ENCODE measurements at regions of chr5 and their contacts with region 1.

Region 1: GRCh38 chr5:86679529-86679928 is 61.8 kb downstream of the COX7C start:
- DNase-seq: peak; percentile 79
- ATAC-seq: peak; percentile 93
- H3K4me3 ChIP-seq: no peak overlapping the region
- H3K27ac ChIP-seq: no peak overlapping the region
- H3K4me1 ChIP-seq: no peaks in the 10 kb centered on the region
- H3K27me3 ChIP-seq: peaks cover 5% of the 10 kb centered on the region; the same call in 1 of the 2 replicates
- CTCF ChIP-seq: peak; percentile 91

Region 2: DNA sequence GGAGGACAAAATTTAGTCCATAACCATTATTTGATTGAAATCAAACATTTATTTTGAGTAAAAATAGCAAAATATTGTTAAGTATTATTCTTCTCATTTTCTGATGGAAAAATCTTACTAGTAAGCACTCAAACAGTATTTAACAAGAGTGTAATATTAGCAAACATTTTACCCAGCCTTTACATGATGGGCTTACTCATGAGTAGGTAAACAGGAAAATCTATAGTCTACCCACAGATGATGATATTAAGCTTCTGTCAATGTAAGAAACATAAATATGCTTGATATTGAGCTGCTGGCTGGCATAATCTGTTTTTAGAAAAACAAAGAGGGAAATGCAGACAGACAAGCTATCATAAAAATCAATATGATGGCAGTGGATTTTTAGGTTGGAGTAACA is 480.2 kb before region 1 on chr5:
- CTCF ChIA-PET with region 1: no interaction called
- POLR2A ChIA-PET with region 1: no interaction called
- intact Hi-C with region 1: loop called (anchors 1 kb)
- DNase-seq: peak; percentile 26
- ATAC-seq: peak; percentile 96
- H3K4me3 ChIP-seq: no peak overlapping the region
- H3K27ac ChIP-seq: no peak overlapping the region
- H3K4me1 ChIP-seq: no peaks in the 10 kb centered on the region
- H3K27me3 ChIP-seq: no peaks in the 10 kb centered on the region
- CTCF ChIP-seq: no peak

Region 3: DNA sequence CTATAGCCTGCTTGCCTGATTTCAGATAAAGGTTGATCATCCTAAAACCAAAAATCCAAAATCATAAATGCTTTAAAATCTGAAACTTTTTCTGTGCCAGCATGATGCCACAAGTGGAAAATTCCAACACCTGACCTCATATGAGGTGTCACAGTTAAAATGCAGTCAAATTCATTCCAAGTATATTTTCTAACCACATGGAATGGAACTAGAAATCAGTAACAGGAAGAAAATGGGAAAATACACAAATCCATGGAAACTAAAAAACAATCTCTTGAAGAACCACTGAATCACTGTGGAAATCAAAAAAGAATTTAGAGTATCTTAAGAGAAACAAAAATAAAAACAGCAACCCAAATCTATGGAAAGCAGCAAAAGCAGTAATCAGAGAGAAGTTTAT is 359.3 kb before region 1 on chr5:
- CTCF ChIA-PET with region 1: no interaction called
- POLR2A ChIA-PET with region 1: no interaction called
- intact Hi-C with region 1: loop called (anchors 5 kb)
- DNase-seq: no peak
- ATAC-seq: no peak; the same call in 1 of the 2 replicates
- H3K4me3 ChIP-seq: no peak overlapping the region
- H3K27ac ChIP-seq: no peak overlapping the region
- H3K4me1 ChIP-seq: no peaks in the 10 kb centered on the region
- H3K27me3 ChIP-seq: no peaks in the 10 kb centered on the region
- CTCF ChIP-seq: no peak

Region 4: DNA sequence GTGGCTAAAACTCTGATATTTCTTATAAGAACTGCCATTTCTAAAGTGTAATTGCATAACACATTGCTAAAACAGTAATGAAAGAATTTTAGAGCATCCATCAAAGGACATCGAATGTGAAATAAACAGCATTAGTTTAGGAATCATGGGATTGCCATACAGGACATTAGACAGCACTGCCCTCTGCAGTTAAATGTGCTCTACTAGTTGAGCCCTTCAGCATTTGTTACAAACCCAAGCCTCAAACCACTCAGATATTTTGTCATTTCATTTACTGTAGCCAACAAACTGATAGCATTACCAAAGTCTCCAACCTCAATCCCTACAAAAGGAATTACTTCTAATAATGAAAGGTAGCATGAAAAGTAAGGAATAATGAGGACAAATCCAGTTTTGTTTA is 178.6 kb before region 1 on chr5:
- CTCF ChIA-PET with region 1: no interaction called
- POLR2A ChIA-PET with region 1: interaction called, 3 read pairs
- intact Hi-C with region 1: loop called (anchors 5 kb)
- DNase-seq: peak; percentile 66
- ATAC-seq: peak; percentile 98
- H3K4me3 ChIP-seq: no peak overlapping the region
- H3K27ac ChIP-seq: no peak overlapping the region
- H3K4me1 ChIP-seq: no peaks in the 10 kb centered on the region
- H3K27me3 ChIP-seq: no peaks in the 10 kb centered on the region
- CTCF ChIP-seq: peak; percentile 80

Region 5: GRCh38 chr5:86565197-86565789 is 114.2 kb before region 1 on chr5:
- CTCF ChIA-PET with region 1: interaction called, 4 read pairs
- POLR2A ChIA-PET with region 1: no interaction called
- intact Hi-C with region 1: loop called (anchors 1 kb)
- DNase-seq: no peak
- ATAC-seq: no peak
- H3K4me3 ChIP-seq: no peak overlapping the region
- H3K27ac ChIP-seq: no peak overlapping the region
- H3K4me1 ChIP-seq: no peaks in the 10 kb centered on the region
- H3K27me3 ChIP-seq: no peaks in the 10 kb centered on the region
- CTCF ChIP-seq: no peak

Region 6: GRCh38 chr5:86737579-86737978 is 58.0 kb after region 1 on chr5:
- CTCF ChIA-PET with region 1: no interaction called
- POLR2A ChIA-PET with region 1: no interaction called
- intact Hi-C with region 1: no loop called
- DNase-seq: no peak
- ATAC-seq: no peak
- H3K4me3 ChIP-seq: no peak overlapping the region
- H3K27ac ChIP-seq: no peak overlapping the region
- H3K4me1 ChIP-seq: no peaks in the 10 kb centered on the region
- H3K27me3 ChIP-seq: no peaks in the 10 kb centered on the region
- CTCF ChIP-seq: no peak

Region 7: DNA sequence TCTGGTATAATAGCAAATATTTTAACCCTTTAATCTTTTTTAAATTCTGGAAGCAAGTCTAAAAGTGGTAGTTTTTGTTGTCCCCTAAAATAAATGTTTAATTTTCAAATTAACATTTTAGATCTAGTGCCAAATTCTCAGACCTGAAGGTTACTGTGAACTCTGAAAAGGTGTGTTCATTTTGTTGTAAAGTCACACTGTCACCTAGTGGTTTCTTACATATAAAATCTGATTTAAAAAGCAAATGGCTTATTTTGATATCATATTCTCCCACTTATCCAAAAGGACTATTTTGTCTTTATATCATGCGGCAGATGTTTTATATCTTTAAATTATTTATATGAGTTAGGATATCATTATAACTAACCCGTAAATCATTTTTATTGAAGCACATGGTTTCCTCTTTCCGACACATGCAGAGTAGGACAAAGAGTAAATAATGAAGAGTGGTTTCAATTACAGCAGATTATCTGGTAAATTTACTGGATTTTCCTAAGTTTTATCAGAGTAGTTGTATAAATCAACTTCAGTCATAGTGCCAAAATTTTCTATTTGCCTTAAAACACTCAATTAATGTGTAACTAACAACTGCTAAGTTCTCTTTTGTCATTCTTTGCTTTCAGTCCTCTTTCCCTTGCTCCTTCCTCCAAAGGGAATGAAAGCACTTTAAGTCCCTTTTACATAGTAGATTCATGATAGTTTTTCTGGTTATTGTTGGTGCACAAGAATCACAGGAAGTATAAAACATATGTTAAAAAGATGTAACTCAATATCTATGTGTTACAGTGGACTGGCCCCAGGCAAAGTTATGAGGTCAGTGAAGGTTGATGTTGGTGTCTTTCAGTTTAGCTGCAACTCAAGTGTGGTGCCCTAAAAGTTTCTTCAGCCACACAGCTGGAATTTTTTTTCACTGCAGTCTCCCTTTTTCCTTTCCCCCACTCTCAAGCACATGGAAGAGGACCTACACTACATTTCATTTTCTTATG is 127.8 kb after region 1 on chr5:
- CTCF ChIA-PET with region 1: no interaction called
- POLR2A ChIA-PET with region 1: no interaction called
- intact Hi-C with region 1: loop called (anchors 1 kb)
- DNase-seq: peak; percentile 41
- ATAC-seq: peak; percentile 71
- H3K4me3 ChIP-seq: no peak overlapping the region
- H3K27ac ChIP-seq: no peak overlapping the region
- H3K4me1 ChIP-seq: peaks cover 6% of the 10 kb centered on the region; the same call in 1 of the 2 replicates
- H3K27me3 ChIP-seq: no peaks in the 10 kb centered on the region
- CTCF ChIP-seq: peak; percentile 63

Region 8: GRCh38 chr5:86880785-86881492 is 201.4 kb after region 1 on chr5:
- CTCF ChIA-PET with region 1: no interaction called
- POLR2A ChIA-PET with region 1: no interaction called
- intact Hi-C with region 1: loop called (anchors 1 kb)
- DNase-seq: peak; percentile 96
- ATAC-seq: peak; percentile 91
- H3K4me3 ChIP-seq: no peak overlapping the region
- H3K27ac ChIP-seq: no peak overlapping the region
- H3K4me1 ChIP-seq: peaks cover 13% of the 10 kb centered on the region; the same call in 1 of the 2 replicates
- H3K27me3 ChIP-seq: no peaks in the 10 kb centered on the region
- CTCF ChIP-seq: peak; percentile 100

Measured in PC-3 (cell line).